Endothelial cell of umbilical vein (primary cell): ENCODE measurements at regions of chr3 and their contacts with region 1.

Region 1: DNA sequence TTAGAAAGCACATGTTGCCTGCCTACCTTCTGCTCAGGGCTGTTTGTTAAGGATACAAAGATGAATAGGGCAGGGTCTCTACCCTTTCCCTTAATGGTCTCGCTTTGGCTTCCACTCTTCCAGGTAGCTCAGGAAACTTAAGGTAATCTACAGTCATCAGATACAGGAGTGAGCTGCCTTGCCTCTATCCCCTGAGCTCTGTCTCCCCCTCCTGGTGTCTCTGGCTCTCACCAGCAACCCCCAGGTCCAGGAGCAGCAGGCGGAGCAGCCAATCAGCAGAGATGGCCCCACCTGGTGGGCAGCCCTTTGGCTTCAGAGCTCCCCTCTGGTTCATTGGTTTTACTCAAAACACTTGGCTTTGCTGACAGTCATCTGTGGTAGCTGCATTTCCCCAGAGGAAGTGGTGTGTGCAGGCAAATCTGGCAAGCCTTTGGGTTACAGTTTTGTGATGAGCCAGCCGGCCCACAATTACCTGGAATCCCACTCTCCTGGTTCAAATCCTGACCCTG is 8.5 kb upstream of the CX3CR1 start:
- DNase-seq: peak; percentile 79
- H3K4me3 ChIP-seq: no peak overlapping the region
- H3K27ac ChIP-seq: no peak overlapping the region
- H3K4me1 ChIP-seq: peaks cover 5% of the 10 kb centered on the region
- H3K27me3 ChIP-seq: peaks cover 0 to 1% of the 10 kb centered on the region in 2 experiments
- CTCF ChIP-seq: peak; percentile 93 to 95
- POLR2A ChIP-seq: no peak

Region 2: DNA sequence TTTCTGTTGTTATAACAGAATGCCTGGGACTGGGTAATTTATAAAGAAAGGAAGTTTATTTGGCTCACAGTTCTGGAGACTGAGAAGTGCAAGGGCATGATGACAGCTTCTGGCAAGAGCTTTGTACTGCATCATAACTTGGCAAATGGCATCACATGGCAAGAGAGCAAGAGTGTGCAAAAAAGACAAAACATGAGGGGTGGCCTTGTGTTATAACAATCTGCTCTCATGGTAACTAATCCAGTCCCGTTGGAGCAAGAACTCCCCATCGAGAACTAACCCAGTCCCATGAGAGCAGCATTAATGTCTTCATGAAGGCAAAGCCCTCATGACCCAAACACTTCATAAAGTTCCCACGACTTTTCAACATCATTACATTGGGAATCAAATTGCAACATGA is 259.8 kb before region 1 on chr3:
- CTCF ChIA-PET with region 1: interaction called, 16 read pairs
- POLR2A ChIA-PET with region 1: no interaction called
- dilution Hi-C with region 1: no loop called
- intact Hi-C with region 1: loop called (anchors 1 kb)
- DNase-seq: no peak
- H3K4me3 ChIP-seq: no peak overlapping the region
- H3K27ac ChIP-seq: no peak overlapping the region
- H3K4me1 ChIP-seq: no peaks in the 10 kb centered on the region
- H3K27me3 ChIP-seq: peaks cover 11 to 16% of the 10 kb centered on the region in 2 experiments
- CTCF ChIP-seq: no peak
- POLR2A ChIP-seq: no peak

Region 3: DNA sequence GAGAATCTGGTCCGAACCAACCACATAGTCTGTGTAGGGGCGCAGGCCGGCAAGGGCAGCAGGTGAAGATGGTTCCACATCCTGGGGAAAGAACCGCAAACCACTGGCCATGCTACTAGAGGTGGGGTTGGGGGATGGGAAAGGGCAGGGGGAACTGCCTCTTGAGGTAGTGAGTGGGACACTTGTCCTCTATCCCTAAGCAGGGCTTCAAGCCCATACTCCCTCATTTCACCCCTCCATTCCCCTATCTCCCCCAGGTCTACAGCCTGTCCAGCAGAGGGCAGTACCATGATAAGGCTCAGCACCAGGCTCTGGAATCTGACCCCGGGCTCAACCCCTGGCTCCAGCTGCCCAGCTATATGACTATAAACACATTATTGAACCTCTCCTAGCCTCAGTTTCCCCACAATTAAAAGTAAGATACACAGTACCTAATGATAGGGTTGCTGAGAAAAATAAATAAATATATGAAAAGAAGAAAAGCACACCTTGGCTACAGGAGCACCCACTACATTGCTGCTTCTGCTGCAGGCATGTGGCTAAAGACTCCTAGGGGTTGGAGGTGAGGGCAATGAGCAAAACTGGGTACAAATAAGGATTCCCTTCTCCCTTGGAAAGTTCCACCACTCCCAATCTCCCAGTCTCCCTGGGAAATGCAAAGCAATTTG is 187.2 kb before region 1 on chr3:
- CTCF ChIA-PET with region 1: interaction called, 26 read pairs
- POLR2A ChIA-PET with region 1: no interaction called
- dilution Hi-C with region 1: no loop called
- intact Hi-C with region 1: loop called (anchors 1 kb)
- DNase-seq: peak; percentile 32
- H3K4me3 ChIP-seq: no peak overlapping the region
- H3K27ac ChIP-seq: no peak overlapping the region
- H3K4me1 ChIP-seq: peaks cover 11% of the 10 kb centered on the region
- H3K27me3 ChIP-seq: no peaks in the 10 kb centered on the region
- CTCF ChIP-seq: peak; percentile 73 to 74
- POLR2A ChIP-seq: no peak

Region 4: DNA sequence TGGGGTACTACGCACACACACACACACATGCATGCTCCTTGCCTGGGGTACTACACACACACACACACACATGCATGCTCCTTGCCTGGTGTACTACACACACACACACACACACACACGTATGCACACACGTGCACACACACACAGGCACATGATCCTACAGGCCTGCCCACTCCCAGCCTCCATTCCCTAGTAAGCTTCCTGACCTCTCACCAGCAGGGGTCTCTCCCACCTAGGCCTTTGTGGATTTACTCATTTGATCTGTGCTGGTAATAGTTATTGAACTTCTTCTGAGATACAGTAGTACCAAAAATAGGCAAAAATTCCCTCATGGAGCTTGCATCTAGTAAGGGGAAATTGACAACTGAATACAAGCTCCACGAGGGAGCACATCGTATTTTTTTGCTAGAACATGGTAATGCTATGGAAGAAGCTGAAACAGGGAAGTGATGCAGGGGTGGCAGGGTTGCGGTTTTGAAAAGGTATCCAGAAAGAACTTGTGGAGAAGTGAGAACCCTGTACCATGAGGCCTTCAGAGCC is 161.8 kb before region 1 on chr3:
- CTCF ChIA-PET with region 1: interaction called, 449 read pairs
- POLR2A ChIA-PET with region 1: no interaction called
- dilution Hi-C with region 1: no loop called
- intact Hi-C with region 1: loop called (anchors 1 kb)
- DNase-seq: peak; percentile 73
- H3K4me3 ChIP-seq: no peak overlapping the region
- H3K27ac ChIP-seq: no peak overlapping the region
- H3K4me1 ChIP-seq: peaks cover 10% of the 10 kb centered on the region
- H3K27me3 ChIP-seq: no peaks in the 10 kb centered on the region
- CTCF ChIP-seq: peak; percentile 53 to 76
- POLR2A ChIP-seq: no peak

Region 5: DNA sequence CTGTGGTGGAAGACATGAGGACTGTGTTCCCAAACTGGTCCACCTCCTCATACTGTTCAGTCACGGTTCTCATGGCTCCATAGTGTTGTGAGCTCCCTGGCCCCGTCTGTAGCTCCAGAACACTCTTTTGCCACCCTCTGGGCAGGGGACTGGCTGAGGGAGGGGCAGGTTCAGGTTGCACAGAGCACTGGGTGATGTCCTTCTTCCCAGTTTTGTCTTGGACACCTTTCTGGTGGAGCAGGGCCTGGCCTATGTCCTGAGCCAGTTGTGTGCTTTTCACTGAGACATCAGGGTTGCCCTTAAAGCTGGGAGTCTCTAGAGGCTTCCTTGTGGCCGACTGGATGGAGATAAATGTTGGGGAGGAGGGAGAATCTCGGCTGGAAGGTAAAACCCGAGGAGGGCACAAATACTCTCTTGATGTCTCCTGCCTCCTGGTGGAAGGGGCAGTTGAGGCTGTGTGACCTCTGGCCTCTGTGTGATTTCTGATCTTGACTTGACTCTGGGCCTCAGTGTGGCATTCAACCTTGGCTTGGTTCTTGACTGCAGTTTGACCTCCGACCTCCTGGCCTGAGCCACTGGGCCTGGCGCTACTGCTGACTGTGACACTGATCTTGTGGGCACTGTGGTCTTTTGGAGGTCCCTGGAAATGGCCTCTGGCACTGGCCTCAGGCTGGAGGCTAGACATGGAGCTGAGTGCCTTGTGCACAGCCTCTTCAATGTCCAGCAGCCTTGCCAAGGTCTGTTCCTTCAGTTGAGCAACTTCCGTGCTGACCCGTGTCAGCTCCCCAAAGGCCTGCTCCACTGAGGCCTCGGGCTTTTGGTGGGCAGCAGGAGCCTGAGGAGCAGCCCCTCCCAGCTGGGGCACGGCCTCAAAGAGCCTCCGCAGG is 104.0 kb before region 1 on chr3:
- CTCF ChIA-PET with region 1: interaction called, 183 read pairs
- POLR2A ChIA-PET with region 1: no interaction called
- dilution Hi-C with region 1: no loop called
- intact Hi-C with region 1: loop called (anchors 1 kb)
- DNase-seq: no peak
- H3K4me3 ChIP-seq: no peak overlapping the region
- H3K27ac ChIP-seq: no peak overlapping the region
- H3K4me1 ChIP-seq: peaks cover 7% of the 10 kb centered on the region
- H3K27me3 ChIP-seq: no peaks in the 10 kb centered on the region
- CTCF ChIP-seq: no peak
- POLR2A ChIP-seq: no peak

Region 6: DNA sequence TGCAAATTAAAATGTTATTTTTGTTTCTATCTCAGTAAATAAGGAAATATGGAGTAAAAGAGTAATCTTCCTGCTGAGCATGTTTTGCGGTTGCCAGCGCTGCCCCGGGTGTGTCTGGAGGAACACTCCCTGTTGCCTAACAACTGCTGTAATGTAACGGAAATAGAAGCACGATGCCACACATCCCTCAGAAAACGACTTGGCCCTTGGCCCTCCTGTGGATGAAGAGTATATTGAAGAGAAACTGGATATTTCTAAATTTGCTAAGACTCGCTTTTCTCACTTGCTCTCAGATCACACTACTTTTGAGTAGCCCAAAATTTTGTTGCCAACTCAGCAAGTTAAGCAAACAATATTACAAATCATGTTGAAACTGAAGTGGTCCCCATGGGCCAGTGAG is 27.4 kb before region 1 on chr3:
- CTCF ChIA-PET with region 1: no interaction called
- POLR2A ChIA-PET with region 1: no interaction called
- dilution Hi-C with region 1: no loop called
- intact Hi-C with region 1: no loop called
- DNase-seq: peak; percentile 66
- H3K4me3 ChIP-seq: no peak overlapping the region
- H3K27ac ChIP-seq: no peak overlapping the region
- H3K4me1 ChIP-seq: no peaks in the 10 kb centered on the region
- H3K27me3 ChIP-seq: peaks cover 8 to 12% of the 10 kb centered on the region in 2 experiments
- CTCF ChIP-seq: peak; percentile 11 to 23
- POLR2A ChIP-seq: no peak

Region 7: DNA sequence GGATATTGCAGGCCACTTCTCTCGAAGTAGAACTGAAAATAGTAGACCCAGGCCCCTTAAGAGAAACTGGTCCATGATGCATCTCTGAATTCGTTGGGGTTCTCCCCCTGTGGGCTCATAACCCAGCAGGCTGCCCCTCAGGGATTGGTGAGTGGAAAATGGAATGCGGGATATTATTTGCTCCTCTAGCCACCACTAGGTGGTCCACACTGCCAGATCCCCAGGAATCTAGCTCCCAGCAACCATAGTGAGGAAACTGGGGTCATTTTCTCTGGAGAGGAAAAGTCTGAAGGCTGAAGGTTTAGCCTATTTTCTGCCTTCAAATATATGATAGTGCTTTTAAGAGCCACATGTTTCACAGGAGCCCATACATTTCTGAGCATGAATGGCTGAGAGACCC is 15.2 kb before region 1 on chr3:
- CTCF ChIA-PET with region 1: interaction called, 25 read pairs
- POLR2A ChIA-PET with region 1: no interaction called
- dilution Hi-C with region 1: no loop called
- intact Hi-C with region 1: no loop called
- DNase-seq: no peak
- H3K4me3 ChIP-seq: no peak overlapping the region
- H3K27ac ChIP-seq: no peak overlapping the region
- H3K4me1 ChIP-seq: no peaks in the 10 kb centered on the region
- H3K27me3 ChIP-seq: peaks cover 8 to 10% of the 10 kb centered on the region in 2 experiments
- CTCF ChIP-seq: peak; percentile 15 to 25
- POLR2A ChIP-seq: no peak